Activated CD4-positive, alpha-beta T cell treated with anti-CD3 and anti-CD28 coated beads, Interleukin-2, amount 10 ng/mL, durations not matched to agents 24 days and 14 days (primary cell): ENCODE measurements at regions of chr9 and their contacts with region 1.

Region 1: DNA sequence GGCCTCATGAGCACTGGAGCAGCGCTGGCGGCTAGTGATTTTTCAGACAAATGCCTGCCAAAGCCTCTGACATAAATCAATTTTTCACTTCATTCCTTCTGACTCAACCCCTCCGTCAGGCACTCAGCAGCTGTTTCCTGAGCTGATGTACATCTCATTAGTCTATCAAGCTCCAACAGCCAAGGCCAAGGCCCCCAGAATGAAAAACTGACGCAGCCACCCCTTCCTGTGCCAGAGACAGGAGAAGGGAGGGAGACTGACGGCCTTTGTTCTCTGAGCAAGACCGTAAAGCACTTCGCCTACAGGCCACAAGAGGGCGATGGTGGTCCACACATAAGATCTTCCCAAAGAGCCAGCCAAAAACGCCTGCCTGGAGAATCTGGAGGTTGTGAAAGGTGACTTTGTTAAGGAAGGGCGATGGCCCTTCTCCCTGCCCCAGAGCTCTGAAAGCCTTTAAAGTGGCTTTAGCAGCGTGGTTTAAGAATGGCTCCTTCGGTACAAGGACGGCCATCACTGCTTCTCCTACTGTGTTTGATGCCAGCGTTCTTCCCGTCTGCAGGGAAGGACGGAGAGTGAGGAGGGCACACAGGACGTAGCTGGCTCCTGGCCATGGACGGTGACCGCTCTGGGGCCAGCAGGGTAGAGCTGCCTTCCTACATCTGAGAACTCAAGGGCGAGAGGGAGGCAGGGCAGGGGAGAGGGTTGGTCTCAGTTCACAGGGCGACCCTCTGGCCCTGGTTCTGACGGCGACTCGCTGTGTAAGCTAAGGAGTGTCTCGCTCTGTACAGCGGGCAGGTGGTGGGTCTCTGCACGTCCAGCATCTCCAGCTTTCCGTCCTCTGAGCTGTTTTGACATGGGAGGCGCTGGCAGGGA is 37.0 kb downstream of the ALG2 start:
- DNase-seq: peak; percentile 92
- H3K4me3 Mint-ChIP-seq: no peak overlapping the region
- H3K27ac Mint-ChIP-seq: peak overlapping the region; percentile 56
- H3K4me1 Mint-ChIP-seq: peaks cover 43% of the 10 kb centered on the region
- H3K27me3 Mint-ChIP-seq: peaks cover 15% of the 10 kb centered on the region

Region 2: DNA sequence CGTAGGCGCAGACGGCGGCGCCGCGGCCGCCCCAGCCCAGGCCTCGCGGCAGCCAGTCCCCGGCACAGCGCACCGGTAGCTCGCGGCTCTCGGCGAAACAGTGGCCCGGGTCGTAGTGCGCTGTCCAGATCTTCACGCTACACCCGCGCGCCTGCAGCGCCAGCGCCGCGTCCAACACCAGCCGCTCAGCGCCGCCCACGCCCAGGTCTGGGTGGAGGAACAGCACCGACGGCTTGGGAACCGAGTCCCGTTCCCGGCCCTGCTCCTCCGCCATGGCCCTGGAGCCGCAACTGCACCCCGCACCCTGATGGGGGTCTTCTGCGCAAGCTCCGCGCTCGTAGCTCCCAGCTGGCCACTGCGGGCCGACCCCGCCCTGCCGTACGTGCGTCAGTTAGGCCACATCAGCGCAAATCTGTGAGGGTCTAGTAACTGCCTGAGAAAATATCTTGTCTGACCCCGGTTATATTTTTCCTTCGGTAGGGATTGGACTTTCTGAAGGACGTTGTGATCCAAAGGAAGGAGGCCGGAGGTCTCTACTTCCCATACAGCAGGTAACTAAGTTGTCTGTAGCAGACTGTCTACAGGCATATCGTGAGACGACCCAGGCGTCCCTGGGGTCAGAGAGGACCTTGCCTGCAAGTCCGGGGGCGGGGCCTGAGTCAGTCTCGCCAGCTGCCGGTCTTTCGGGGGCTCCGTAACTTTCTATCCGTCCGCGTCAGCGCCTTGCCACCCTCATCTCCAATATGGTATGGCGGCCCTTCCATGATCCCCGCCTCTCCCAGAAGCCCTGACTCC is 37.1 kb after region 1 on chr9 and contains the starts of genes ALG2 and SEC61B:
- intact Hi-C with region 1: loop called (anchors 1 kb)
- DNase-seq: peak; percentile 98
- H3K4me3 Mint-ChIP-seq: peak within 1 kb of the TSS; percentile 97
- H3K27ac Mint-ChIP-seq: peak within 1 kb of the TSS; percentile 99
- H3K4me1 Mint-ChIP-seq: peaks cover 51% of the 10 kb centered on the region
- H3K27me3 Mint-ChIP-seq: no peaks in the 10 kb centered on the region
- total RNA-seq, gene ALG2: 29.2 and 31.0 TPM in 2 replicates
- total RNA-seq, gene SEC61B: 169 and 170 TPM in 2 replicates

Region 3: DNA sequence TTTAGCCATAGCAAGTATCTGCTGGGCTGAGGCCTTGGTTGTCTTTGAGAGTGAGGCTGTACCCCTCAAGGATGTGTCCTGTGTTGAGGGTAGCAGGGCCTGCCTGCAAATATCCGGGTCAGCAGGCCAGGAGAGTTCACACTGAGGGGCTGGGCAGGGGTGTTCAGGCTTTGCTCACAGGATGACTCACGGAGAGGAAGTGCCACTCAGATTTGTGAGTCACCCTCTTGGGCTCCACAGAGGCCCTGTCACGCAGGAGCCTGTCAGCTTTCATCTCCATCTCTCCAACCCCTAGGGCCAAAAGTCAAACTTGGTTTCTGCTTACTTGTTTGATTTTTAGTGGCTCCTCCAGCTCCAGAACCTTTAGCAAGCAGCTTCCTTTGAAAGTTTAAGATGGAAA is 248.8 kb after region 1 on chr9:
- intact Hi-C with region 1: loop called (anchors 10 kb)
- DNase-seq: peak; percentile 83
- H3K4me3 Mint-ChIP-seq: no peak overlapping the region
- H3K27ac Mint-ChIP-seq: peak overlapping the region; percentile 69
- H3K4me1 Mint-ChIP-seq: peaks cover 21% of the 10 kb centered on the region
- H3K27me3 Mint-ChIP-seq: no peaks in the 10 kb centered on the region

Region 4: GRCh38 chr9:100216178-100216787 is 1031.6 kb after region 1 on chr9:
- intact Hi-C with region 1: loop called (anchors 10 kb)
- DNase-seq: peak; percentile 89
- H3K4me3 Mint-ChIP-seq: no peak overlapping the region
- H3K27ac Mint-ChIP-seq: no peak overlapping the region
- H3K4me1 Mint-ChIP-seq: peaks cover 2% of the 10 kb centered on the region
- H3K27me3 Mint-ChIP-seq: no peaks in the 10 kb centered on the region